ENCODE measurements at regions of chr1 and their contacts with region 1.

Region 1: GRCh38 chr1:212608209-212608955 is at the start of gene ATF3:
- DNase-seq: peak; percentile 98
- H3K4me3 ChIP-seq: peak within 1 kb of the TSS; percentile 51 to 77 (median 52)
- H3K27ac ChIP-seq: peak within 1 kb of the TSS; percentile 76
- H3K4me1 ChIP-seq: peaks cover 27% of the 10 kb centered on the region
- H3K27me3 ChIP-seq: peaks cover 38 to 44% of the 10 kb centered on the region in 2 experiments
- CTCF ChIP-seq: no peak
- POLR2A ChIP-seq: peak; percentile 98
- total RNA-seq, gene ATF3: 6.1 and 10.7 TPM in 2 replicates

Region 2: GRCh38 chr1:212558693-212559480 is 49.5 kb before region 1 on chr1:
- CTCF ChIA-PET with region 1: interaction called, 5 read pairs
- POLR2A ChIA-PET with region 1: interaction called, 27 read pairs
- dilution Hi-C with region 1: no loop called
- intact Hi-C with region 1: loop called (anchors 1 kb)
- DNase-seq: peak; percentile 84
- H3K4me3 ChIP-seq: peak overlapping the region; percentile 58 to 74 (median 68)
- H3K27ac ChIP-seq: peak overlapping the region; percentile 69
- H3K4me1 ChIP-seq: peaks cover 18% of the 10 kb centered on the region
- H3K27me3 ChIP-seq: peaks cover 4 to 5% of the 10 kb centered on the region in 2 experiments
- CTCF ChIP-seq: no peak
- POLR2A ChIP-seq: peak; percentile 43

Region 3: GRCh38 chr1:212595787-212596714 is 12.3 kb before region 1 on chr1:
- CTCF ChIA-PET with region 1: interaction called, 15 read pairs
- POLR2A ChIA-PET with region 1: interaction called, 44 read pairs
- dilution Hi-C with region 1: no loop called
- intact Hi-C with region 1: loop called (anchors 1 kb)
- DNase-seq: peak; percentile 96
- H3K4me3 ChIP-seq: peak overlapping the region in 1 of 3 experiments; percentile 41
- H3K27ac ChIP-seq: peak overlapping the region; percentile 99
- H3K4me1 ChIP-seq: peaks cover 15% of the 10 kb centered on the region
- H3K27me3 ChIP-seq: peaks cover 8 to 11% of the 10 kb centered on the region in 2 experiments
- CTCF ChIP-seq: peak; percentile 55 to 81
- POLR2A ChIP-seq: no peak

Region 4: GRCh38 chr1:212630158-212630900 is 21.9 kb after region 1 on chr1:
- CTCF ChIA-PET with region 1: interaction called, 6 read pairs
- POLR2A ChIA-PET with region 1: interaction called, 10 read pairs
- dilution Hi-C with region 1: no loop called
- intact Hi-C with region 1: no loop called
- DNase-seq: peak; percentile 42
- H3K4me3 ChIP-seq: no peak overlapping the region
- H3K27ac ChIP-seq: no peak overlapping the region
- H3K4me1 ChIP-seq: peaks cover 9% of the 10 kb centered on the region
- H3K27me3 ChIP-seq: peaks cover 0 to 6% of the 10 kb centered on the region in 2 experiments
- CTCF ChIP-seq: peak; percentile 73 to 86
- POLR2A ChIP-seq: no peak

Region 5: DNA sequence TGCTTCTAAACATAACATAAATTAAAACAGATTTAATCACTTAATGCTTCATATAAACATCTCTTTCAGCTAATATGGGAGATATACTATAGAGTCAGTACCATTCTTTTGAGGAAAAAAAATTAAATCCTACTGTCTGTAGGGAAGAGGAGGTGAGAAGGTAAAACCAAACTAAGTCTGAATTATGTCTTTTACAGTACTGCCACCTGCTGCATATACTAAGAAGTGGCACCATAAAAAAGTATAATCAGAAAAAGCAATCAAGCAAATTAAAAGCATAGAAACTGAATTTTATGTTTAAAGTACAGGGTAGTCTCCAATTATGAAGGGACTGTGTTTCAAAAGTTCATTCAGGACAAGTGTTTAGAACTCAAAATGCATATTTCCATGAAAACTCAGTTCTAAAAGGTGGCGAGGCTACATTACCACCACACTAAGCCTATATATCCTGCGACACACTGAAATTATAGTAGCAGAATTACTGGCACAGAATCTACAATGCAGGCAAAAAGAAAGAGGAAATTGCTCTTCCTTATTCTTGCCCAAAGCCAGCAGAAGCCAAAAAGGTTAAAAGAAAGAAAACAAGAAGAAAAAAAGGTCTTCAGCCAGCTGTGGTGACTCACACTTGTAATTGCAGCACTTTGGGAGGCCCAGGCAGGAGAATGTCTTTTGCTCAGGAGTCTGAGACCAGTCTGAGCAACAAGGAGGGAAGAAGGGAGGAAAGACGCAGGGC is 174.2 kb after region 1 on chr1:
- CTCF ChIA-PET with region 1: interaction called, 3 read pairs
- POLR2A ChIA-PET with region 1: no interaction called
- dilution Hi-C with region 1: no loop called
- intact Hi-C with region 1: loop called (anchors 2 kb)
- DNase-seq: peak; percentile 79
- H3K4me3 ChIP-seq: no peak overlapping the region
- H3K27ac ChIP-seq: peak overlapping the region; percentile 15
- H3K4me1 ChIP-seq: peaks cover 15% of the 10 kb centered on the region
- H3K27me3 ChIP-seq: no peaks in the 10 kb centered on the region
- CTCF ChIP-seq: peak; percentile 34 to 38
- POLR2A ChIP-seq: no peak

Region 6: GRCh38 chr1:213003256-213003655 is 394.9 kb after region 1 on chr1:
- CTCF ChIA-PET with region 1: no interaction called
- POLR2A ChIA-PET with region 1: no interaction called
- dilution Hi-C with region 1: no loop called
- intact Hi-C with region 1: no loop called
- DNase-seq: no peak
- H3K4me3 ChIP-seq: no peak overlapping the region
- H3K27ac ChIP-seq: no peak overlapping the region
- H3K4me1 ChIP-seq: no peaks in the 10 kb centered on the region
- H3K27me3 ChIP-seq: no peaks in the 10 kb centered on the region
- CTCF ChIP-seq: no peak
- POLR2A ChIP-seq: no peak